ENCODE measurements at regions of chr22 and their contacts with region 1.

Region 1: GRCh38 chr22:29480512-29481264 is 670 bp downstream of the NEFH start:
- DNase-seq: no peak
- ATAC-seq: no peak
- H3K4me3 ChIP-seq: no peak overlapping the region
- H3K27ac ChIP-seq: no peak overlapping the region
- H3K4me1 ChIP-seq: peaks cover 29% of the 10 kb centered on the region
- CTCF ChIP-seq: no peak
- EP300 ChIP-seq: no peak
- POLR2A ChIP-seq: no peak
- RAD21 ChIP-seq: no peak

Region 2: DNA sequence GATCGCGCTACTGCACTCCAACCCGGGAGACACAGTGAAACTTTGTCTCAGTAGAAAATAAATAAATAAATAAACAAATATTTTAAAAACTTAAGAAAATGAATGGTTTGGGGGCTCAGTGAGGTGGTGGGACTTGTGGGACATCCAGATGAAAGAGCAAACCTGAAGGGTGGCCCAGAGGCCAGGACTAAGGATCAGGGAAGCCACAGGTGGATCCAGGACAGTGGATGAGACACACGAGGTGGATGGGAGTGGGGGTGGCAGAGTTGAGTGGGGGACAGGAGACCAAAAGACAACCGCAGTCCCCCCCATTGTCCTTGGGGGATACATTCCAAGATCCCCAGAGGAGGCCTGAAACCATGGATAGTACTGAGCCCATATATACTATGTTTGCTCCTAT is 35.2 kb before region 1 on chr22:
- CTCF ChIA-PET with region 1: no interaction called
- POLR2A ChIA-PET with region 1: no interaction called
- DNase-seq: no peak
- ATAC-seq: no peak
- H3K4me3 ChIP-seq: no peak overlapping the region
- H3K27ac ChIP-seq: no peak overlapping the region
- H3K4me1 ChIP-seq: no peaks in the 10 kb centered on the region
- CTCF ChIP-seq: no peak
- EP300 ChIP-seq: no peak
- POLR2A ChIP-seq: no peak
- RAD21 ChIP-seq: no peak

Region 3: DNA sequence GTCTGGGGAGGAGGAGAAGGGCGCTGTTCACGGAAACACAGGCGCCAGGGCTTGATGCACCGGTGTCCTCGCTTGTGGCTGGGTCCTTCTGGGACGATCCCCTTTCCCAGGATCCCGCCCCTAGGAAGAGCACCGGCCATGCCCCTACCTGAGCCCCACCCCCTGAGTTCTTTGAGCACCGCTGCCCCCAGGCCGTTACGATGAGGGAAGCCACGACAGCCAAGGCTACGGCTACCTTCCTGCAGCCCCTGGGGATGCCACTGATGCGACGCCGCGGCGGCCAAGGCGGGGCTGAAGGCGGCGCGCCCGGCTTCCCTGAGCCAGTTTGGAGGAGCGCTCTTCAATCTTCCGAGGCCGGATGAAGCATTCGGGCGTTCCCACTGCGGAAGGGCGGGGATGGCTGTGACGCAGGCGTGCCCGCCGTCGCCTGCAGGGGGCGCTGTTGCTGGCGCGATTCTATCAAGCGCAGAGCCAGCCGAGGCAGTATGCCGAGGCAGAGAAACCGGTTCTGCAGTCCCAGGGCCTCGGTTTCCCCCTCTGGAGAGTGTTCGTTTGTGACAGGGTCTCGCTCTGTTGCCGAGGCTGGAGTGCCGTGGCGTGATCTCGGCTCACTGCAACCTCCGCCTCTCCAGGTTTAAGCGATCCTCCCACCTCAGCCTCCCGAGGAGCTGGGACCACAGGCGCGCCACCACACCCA is 10.4 kb before region 1 on chr22:
- CTCF ChIA-PET with region 1: interaction called, 40 read pairs
- POLR2A ChIA-PET with region 1: no interaction called
- DNase-seq: peak; percentile 66 to 75
- ATAC-seq: peak; percentile 94 to 97
- H3K4me3 ChIP-seq: peak overlapping the region; percentile 51
- H3K27ac ChIP-seq: peak overlapping the region; percentile 65 to 84; a peak in 4 of 6 replicates
- H3K4me1 ChIP-seq: 0 out of 3 replicates have a peak, but pooled peaks cover 4% of the 10 kb centered on the region
- CTCF ChIP-seq: peak; percentile 82
- EP300 ChIP-seq: no peak
- POLR2A ChIP-seq: no peak
- RAD21 ChIP-seq: peak; percentile 42 to 59

Region 4: GRCh38 chr22:29621761-29622526 is 141.3 kb after region 1 on chr22:
- CTCF ChIA-PET with region 1: no interaction called
- POLR2A ChIA-PET with region 1: no interaction called
- DNase-seq: peak; percentile 69 to 86
- ATAC-seq: peak; percentile 82 to 86
- H3K4me3 ChIP-seq: peak overlapping the region; percentile 23
- H3K27ac ChIP-seq: peak overlapping the region; percentile 93 to 94
- H3K4me1 ChIP-seq: peaks cover 96% of the 10 kb centered on the region
- CTCF ChIP-seq: no peak
- EP300 ChIP-seq: peak; percentile 82 to 89; a peak in 4 of 5 replicates
- POLR2A ChIP-seq: no peak
- RAD21 ChIP-seq: no peak

Measured in A549 (cell line).